ENCODE measurements at regions of chr13 and their contacts with region 1.

Region 1: GRCh38 chr13:48233046-48233907 is at the start of gene ITM2B:
- DNase-seq: peak; percentile 91
- H3K4me3 ChIP-seq: peak within 1 kb of the TSS; percentile 86 to 98 (median 94)
- H3K27ac ChIP-seq: peak within 1 kb of the TSS; percentile 96 to 100 (median 99)
- H3K4me1 ChIP-seq: peaks cover 0 to 45% (median 37%) of the 10 kb centered on the region in 4 donors
- H3K27me3 ChIP-seq: no peaks in the 10 kb centered on the region
- CTCF ChIP-seq: peak in 2 of 4 experiments; percentile 28 to 49
- EP300 ChIP-seq: no peak
- POLR2A ChIP-seq: peak in 1 of 2 donors; percentile 66
- total RNA-seq, gene ITM2B: 266 to 478 (median 371) TPM

Region 2: GRCh38 chr13:48037346-48038173 is 195.7 kb before region 1 on chr13 and contains the start of gene NUDT15:
- intact Hi-C with region 1: loop called (anchors 5 kb)
- DNase-seq: peak; percentile 96
- H3K4me3 ChIP-seq: peak within 1 kb of the TSS; percentile 62 to 78 (median 77)
- H3K27ac ChIP-seq: peak within 1 kb of the TSS; percentile 91 to 97 (median 96)
- H3K4me1 ChIP-seq: peaks cover 0 to 14% (median 14%) of the 10 kb centered on the region in 4 donors
- H3K27me3 ChIP-seq: no peaks in the 10 kb centered on the region
- CTCF ChIP-seq: peak; percentile 88 to 98 (median 98)
- EP300 ChIP-seq: peak in 3 of 4 donors; percentile 33 to 81 (median 76)
- POLR2A ChIP-seq: peak; percentile 59 to 66
- total RNA-seq, gene NUDT15: 6.6 to 8.9 (median 7.8) TPM

Region 3: DNA sequence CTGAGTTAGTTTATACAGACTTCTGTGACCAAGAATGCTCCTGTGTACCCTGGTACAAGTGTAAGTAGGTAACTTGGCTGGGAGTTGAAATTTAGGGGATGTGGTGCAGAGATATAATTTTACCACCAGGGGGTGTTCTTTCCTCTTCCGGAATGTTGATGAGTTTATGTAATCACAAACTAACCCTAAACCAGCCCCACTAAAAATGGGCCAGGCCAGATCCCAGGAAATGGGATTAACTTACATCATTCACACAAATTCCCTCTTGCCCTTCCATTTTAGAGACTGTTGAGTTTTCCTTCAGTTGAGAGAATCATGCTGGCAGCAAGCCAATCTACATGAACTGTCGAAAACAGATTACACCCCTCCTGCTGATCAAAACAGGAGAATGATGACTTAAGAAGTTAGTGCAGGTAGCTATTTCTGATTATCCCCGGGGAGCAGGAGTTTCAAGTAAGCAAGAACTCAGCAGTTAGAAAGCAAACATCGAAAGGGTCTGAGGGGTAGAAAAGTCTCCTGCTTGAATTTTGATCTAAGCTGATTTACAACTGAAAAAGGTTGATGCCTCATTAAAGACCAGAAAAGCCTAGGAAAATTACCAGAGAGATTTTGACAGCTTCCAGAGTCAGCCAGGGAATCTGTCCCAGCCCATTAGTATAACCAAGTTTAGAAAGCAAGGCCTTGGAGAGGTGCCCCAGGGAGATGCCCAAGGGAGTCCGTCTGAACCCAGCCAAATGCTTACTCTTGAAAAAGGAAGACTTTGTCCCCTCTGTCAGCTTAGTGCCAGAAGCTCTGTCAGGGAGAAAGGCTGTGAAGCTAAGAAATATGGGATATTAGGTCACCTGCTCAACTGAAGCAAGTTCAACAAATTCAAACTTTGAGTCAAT is 106.1 kb before region 1 on chr13:
- intact Hi-C with region 1: loop called (anchors 2 kb)
- DNase-seq: peak; percentile 87
- H3K4me3 ChIP-seq: no peak overlapping the region
- H3K27ac ChIP-seq: peak overlapping the region; percentile 83 to 86 (median 84)
- H3K4me1 ChIP-seq: peaks cover 0 to 56% (median 48%) of the 10 kb centered on the region in 4 donors
- H3K27me3 ChIP-seq: no peaks in the 10 kb centered on the region
- CTCF ChIP-seq: peak; percentile 32 to 74 (median 66)
- EP300 ChIP-seq: peak in 1 of 4 donors; percentile 12
- POLR2A ChIP-seq: no peak

Region 4: GRCh38 chr13:48532506-48533499 is 299.5 kb after region 1 on chr13 and contains the start of gene RCBTB2:
- intact Hi-C with region 1: loop called (anchors 5 kb)
- DNase-seq: peak; percentile 99
- H3K4me3 ChIP-seq: peak within 1 kb of the TSS; percentile 77 to 81 (median 78)
- H3K27ac ChIP-seq: peak within 1 kb of the TSS; percentile 94 to 98 (median 97)
- H3K4me1 ChIP-seq: peaks cover 0 to 19% (median 11%) of the 10 kb centered on the region in 4 donors
- H3K27me3 ChIP-seq: no peaks in the 10 kb centered on the region
- CTCF ChIP-seq: no peak
- EP300 ChIP-seq: peak in 1 of 4 donors; percentile 57
- POLR2A ChIP-seq: peak; percentile 83 to 93
- total RNA-seq, gene RCBTB2: 8.6 to 21.9 (median 14.9) TPM

Region 5: DNA sequence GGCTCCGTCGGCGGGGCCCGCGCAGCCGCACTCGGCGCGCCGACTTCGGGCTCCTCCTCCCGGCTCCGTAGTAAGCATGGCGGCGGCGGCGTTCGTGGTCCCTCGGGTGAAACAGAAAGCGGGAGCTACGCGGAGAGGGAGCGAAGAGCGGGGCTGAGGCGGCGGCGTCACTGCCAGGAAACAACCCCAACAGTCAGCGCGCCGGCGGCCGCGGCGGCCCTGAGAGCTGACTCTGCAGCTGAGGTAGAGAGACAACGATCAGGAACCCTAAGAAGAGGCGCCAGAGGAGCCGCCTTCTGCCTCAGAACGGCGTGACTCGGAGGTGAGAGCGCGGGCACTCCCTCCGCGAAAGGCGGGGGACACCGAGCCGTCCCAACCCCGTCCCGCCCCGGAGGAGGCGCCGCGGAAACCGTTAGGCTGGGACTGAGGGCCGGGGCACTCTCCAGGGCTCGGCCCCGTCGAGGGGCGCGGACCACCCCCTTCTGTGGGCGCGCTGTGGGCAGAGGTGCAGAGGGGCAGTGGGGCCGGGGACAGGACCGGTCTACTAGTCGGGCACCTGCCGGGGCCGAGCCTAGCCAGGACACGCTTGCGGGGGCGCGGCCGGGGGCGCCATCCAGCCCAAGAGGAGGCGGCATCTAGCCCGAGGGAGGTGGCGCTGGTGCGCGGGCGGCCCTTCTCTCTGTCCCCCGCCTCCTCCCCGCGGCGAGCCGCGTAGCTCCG is 742.7 kb after region 1 on chr13 and contains the start of gene FNDC3A:
- intact Hi-C with region 1: loop called (anchors 5 kb)
- DNase-seq: peak; percentile 90
- H3K4me3 ChIP-seq: peak within 1 kb of the TSS; percentile 80 to 95 (median 92)
- H3K27ac ChIP-seq: peak within 1 kb of the TSS; percentile 99 to 100 (median 99)
- H3K4me1 ChIP-seq: peaks cover 0 to 45% (median 38%) of the 10 kb centered on the region in 4 donors
- H3K27me3 ChIP-seq: no peaks in the 10 kb centered on the region
- CTCF ChIP-seq: no peak
- EP300 ChIP-seq: no peak
- POLR2A ChIP-seq: no peak
- total RNA-seq, gene FNDC3A: 47.8 to 61.4 (median 54.3) TPM